Activated CD8-positive, alpha-beta T cell treated with anti-CD3 and anti-CD28 coated beads for 36 hours (primary cell): ENCODE measurements at regions of chr4 and their contacts with region 1.

Region 1: GRCh38 chr4:173013232-173013930 is 155.2 kb upstream of the GALNT7 start:
- DNase-seq: peak; percentile 67
- ATAC-seq: peak; percentile 58
- H3K4me3 Mint-ChIP-seq: no peak overlapping the region
- H3K27ac Mint-ChIP-seq: no peak overlapping the region
- H3K4me1 Mint-ChIP-seq: no peaks in the 10 kb centered on the region
- H3K27me3 Mint-ChIP-seq: peaks cover 2% of the 10 kb centered on the region
- CTCF ChIP-seq: peak; percentile 74

Region 2: GRCh38 chr4:173025131-173025530 is 11.8 kb after region 1 on chr4:
- CTCF ChIA-PET with region 1: interaction called, 40 read pairs
- POLR2A ChIA-PET with region 1: no interaction called
- intact Hi-C with region 1: no loop called
- DNase-seq: peak; percentile 40
- ATAC-seq: peak; percentile 80
- H3K4me3 Mint-ChIP-seq: no peak overlapping the region
- H3K27ac Mint-ChIP-seq: no peak overlapping the region
- H3K4me1 Mint-ChIP-seq: no peaks in the 10 kb centered on the region
- H3K27me3 Mint-ChIP-seq: no peaks in the 10 kb centered on the region
- CTCF ChIP-seq: peak; percentile 59

Region 3: DNA sequence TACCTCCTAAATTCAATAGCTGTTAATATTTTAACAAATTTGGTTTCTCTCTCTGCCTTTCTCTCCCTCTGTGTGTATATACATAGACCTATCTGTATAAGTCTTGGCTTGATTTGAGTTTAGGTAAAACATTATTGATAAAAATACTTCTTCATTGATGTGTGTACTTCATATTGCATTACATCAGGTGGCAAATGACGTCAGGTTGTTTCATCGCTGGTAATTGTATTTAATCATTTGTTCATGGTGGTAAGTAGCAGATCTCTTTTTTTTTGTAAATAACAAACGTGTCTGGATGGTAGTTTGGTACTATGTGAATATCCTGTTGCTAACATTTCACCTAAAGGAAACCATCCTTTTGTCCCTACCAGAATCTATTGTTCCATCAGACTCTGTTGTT is 210.4 kb after region 1 on chr4:
- CTCF ChIA-PET with region 1: interaction called, 10 read pairs
- POLR2A ChIA-PET with region 1: no interaction called
- intact Hi-C with region 1: no loop called
- DNase-seq: no peak
- ATAC-seq: no peak
- H3K4me3 Mint-ChIP-seq: no peak overlapping the region
- H3K27ac Mint-ChIP-seq: no peak overlapping the region
- H3K4me1 Mint-ChIP-seq: peaks cover 14% of the 10 kb centered on the region
- H3K27me3 Mint-ChIP-seq: no peaks in the 10 kb centered on the region
- CTCF ChIP-seq: no peak

Region 4: GRCh38 chr4:173257732-173258717 is 244.6 kb after region 1 on chr4:
- CTCF ChIA-PET with region 1: interaction called, 70 read pairs
- POLR2A ChIA-PET with region 1: no interaction called
- intact Hi-C with region 1: loop called (anchors 1 kb)
- DNase-seq: peak; percentile 77
- ATAC-seq: peak; percentile 94
- H3K4me3 Mint-ChIP-seq: no peak overlapping the region
- H3K27ac Mint-ChIP-seq: no peak overlapping the region
- H3K4me1 Mint-ChIP-seq: peaks cover 7% of the 10 kb centered on the region
- H3K27me3 Mint-ChIP-seq: no peaks in the 10 kb centered on the region
- CTCF ChIP-seq: peak; percentile 73

Region 5: GRCh38 chr4:173273941-173274340 is 260.6 kb after region 1 on chr4:
- CTCF ChIA-PET with region 1: interaction called, 15 read pairs
- POLR2A ChIA-PET with region 1: no interaction called
- intact Hi-C with region 1: no loop called
- DNase-seq: no peak
- ATAC-seq: no peak
- H3K4me3 Mint-ChIP-seq: no peak overlapping the region
- H3K27ac Mint-ChIP-seq: no peak overlapping the region
- H3K4me1 Mint-ChIP-seq: no peaks in the 10 kb centered on the region
- H3K27me3 Mint-ChIP-seq: no peaks in the 10 kb centered on the region
- CTCF ChIP-seq: no peak

Region 6: DNA sequence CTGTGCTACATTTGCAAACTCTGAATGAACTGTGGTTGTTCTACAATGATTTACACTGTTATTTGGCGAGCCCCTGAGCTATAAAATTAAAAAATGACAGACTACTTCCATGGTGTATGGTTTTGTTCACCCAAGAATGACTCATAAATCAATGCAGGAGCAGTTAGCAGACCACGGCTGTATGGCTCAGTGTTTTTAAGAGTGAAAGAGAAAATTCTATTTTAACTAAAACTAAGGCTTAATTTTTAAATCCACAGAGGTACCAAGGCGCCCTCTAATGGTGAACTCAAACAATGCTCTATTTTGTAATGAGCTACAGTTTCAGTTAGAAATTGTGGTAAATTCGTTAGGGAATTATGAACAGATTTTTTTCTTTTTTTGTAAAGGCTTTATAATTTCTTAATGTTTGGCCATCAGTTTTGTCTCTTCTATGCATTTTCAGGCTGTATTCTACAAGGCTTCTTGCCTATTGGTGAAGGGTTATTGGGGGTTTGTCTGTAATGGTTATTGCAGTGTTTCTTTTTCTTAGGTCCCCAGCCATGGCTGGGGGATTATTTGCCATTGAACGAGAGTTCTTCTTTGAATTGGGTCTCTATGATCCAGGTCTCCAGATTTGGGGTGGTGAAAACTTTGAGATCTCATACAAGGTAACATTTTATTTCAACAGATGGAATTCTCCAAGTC is 288.3 kb after region 1 on chr4:
- CTCF ChIA-PET with region 1: interaction called, 98 read pairs
- POLR2A ChIA-PET with region 1: no interaction called
- intact Hi-C with region 1: loop called (anchors 1 kb)
- DNase-seq: peak; percentile 28
- ATAC-seq: peak; percentile 67
- H3K4me3 Mint-ChIP-seq: no peak overlapping the region
- H3K27ac Mint-ChIP-seq: no peak overlapping the region
- H3K4me1 Mint-ChIP-seq: peaks cover 3% of the 10 kb centered on the region
- H3K27me3 Mint-ChIP-seq: no peaks in the 10 kb centered on the region
- CTCF ChIP-seq: peak; percentile 84

Region 7: GRCh38 chr4:173413036-173413435 is 399.7 kb after region 1 on chr4:
- CTCF ChIA-PET with region 1: interaction called, 14 read pairs
- POLR2A ChIA-PET with region 1: no interaction called
- intact Hi-C with region 1: loop called (anchors 5 kb)
- DNase-seq: no peak
- ATAC-seq: no peak
- H3K4me3 Mint-ChIP-seq: no peak overlapping the region
- H3K27ac Mint-ChIP-seq: no peak overlapping the region
- H3K4me1 Mint-ChIP-seq: no peaks in the 10 kb centered on the region
- H3K27me3 Mint-ChIP-seq: no peaks in the 10 kb centered on the region
- CTCF ChIP-seq: no peak